Gastrocnemius medialis (tissue), 4 donors: ENCODE measurements at regions of chr5 and their contacts with region 1.

Region 1: DNA sequence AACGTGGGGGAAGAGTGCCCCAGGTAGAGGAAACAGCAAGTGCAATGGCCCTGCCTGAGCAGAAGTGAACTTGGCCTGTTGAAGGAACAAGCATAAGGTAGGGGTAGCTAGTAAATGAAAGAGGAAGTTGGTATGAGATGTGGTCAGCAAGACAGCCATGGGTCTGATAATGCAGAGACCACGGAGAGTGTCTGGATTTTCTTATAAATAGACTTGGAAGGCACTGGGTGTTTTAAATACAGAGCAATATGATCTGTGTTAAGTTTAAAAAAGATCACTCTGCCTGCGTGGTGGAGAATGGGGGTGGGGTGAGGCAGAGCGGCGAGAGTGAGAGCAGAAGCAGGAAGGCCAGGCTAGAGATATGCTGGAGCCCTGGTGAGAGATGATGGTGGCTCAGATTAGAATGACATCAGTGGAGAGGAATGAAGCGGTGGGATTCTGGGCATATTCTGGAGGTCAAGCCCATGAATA is 4.2 kb downstream of the ADAM19 start:
- DNase-seq: peak in 1 of 2 donors; percentile 39
- ATAC-seq: peak; percentile 43 to 60
- H3K4me3 ChIP-seq: peak overlapping the region in 3 of 4 donors; percentile 7 to 19 (median 7)
- H3K27ac ChIP-seq: peak overlapping the region; percentile 34 to 67 (median 60)
- H3K4me1 ChIP-seq: peaks cover 44 to 52% of the 10 kb centered on the region in 2 donors
- H3K27me3 ChIP-seq: no peaks in the 10 kb centered on the region
- CTCF ChIP-seq: no peak
- POLR2A ChIP-seq: no peak

Region 2: GRCh38 chr5:157516626-157517325 is 54.6 kb before region 1 on chr5:
- in situ Hi-C with region 1: no loop called
- intact Hi-C with region 1: loop called (anchors 5 kb)
- DNase-seq: peak; percentile 50 to 72
- ATAC-seq: peak; percentile 78 to 81
- H3K4me3 ChIP-seq: no peak overlapping the region
- H3K27ac ChIP-seq: peak overlapping the region in 3 of 4 donors; percentile 24 to 56 (median 36)
- H3K4me1 ChIP-seq: peaks cover 11 to 28% of the 10 kb centered on the region in 2 donors
- H3K27me3 ChIP-seq: no peaks in the 10 kb centered on the region
- CTCF ChIP-seq: no peak
- POLR2A ChIP-seq: no peak

Region 3: DNA sequence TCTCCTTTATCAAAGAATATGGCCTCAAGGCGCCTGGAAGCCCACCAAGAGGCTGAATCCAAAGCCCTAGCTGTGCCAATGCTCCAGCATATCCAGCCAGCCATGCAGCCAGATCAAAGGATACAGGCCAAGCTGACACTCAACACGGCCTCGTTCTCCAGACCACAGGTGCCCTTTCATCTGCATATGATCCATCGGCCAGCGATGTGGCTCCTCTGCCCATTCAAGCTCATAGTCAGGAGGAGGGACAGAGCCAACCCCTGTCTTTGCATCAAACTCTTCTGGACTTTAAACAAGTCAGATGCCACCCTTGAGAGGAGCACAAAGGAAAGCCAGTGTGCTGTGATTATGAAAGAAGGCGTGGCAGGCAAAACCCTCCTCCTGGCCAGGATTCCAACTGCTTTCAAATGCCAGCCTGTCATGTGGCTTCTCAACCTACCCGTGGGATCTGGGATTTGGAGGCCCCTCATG is 38.3 kb before region 1 on chr5:
- in situ Hi-C with region 1: no loop called
- intact Hi-C with region 1: loop called (anchors 5 kb)
- DNase-seq: peak; percentile 30 to 49
- ATAC-seq: peak; percentile 76 to 80
- H3K4me3 ChIP-seq: no peak overlapping the region
- H3K27ac ChIP-seq: peak overlapping the region in 3 of 4 donors; percentile 47 to 61 (median 58)
- H3K4me1 ChIP-seq: peaks cover 32 to 36% of the 10 kb centered on the region in 2 donors
- H3K27me3 ChIP-seq: no peaks in the 10 kb centered on the region
- CTCF ChIP-seq: no peak
- POLR2A ChIP-seq: no peak